A549 (cell line): ENCODE measurements at regions of chrX and their contacts with region 1.

Region 1: DNA sequence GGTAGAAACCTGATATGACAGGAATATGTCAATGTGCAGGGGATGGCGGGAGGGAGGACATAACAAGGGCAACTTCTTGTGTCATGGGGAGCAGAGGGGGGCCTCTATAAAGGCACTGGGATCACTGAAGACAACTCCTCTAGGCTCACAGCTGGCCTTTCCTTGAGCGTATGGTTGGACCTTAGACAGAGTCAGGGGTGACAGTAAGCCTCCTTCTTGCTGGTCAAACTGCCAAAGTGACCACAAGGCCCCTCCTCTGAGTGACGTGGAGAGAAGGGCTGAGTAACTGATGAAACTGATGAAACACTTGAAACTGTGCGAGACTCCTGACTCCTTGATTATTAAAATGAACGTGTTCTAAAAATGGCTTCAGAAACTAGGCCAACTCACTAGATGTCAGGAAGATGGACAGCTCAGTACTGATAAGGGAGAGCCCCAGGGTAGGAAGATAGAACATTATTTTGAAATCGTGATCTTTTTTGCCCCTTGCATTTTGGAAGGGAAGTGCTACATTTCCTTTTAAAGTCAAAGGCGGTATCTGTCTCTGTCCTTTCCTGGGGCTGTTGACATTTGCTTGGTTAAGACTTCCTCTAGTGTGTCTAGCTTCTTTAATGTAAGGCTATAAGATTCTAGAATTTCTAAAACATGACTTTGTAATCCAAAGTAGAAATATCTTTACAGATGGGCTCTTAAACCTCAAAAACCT is 1.6 kb downstream of the RAB33A start:
- DNase-seq: no peak
- ATAC-seq: no peak
- H3K4me3 ChIP-seq: no peak overlapping the region
- H3K27ac ChIP-seq: peak overlapping the region in 1 of 2 experiments; percentile 57; a peak in 2 of 6 replicates
- H3K4me1 ChIP-seq: peaks cover 24% of the 10 kb centered on the region; the same call in 2 of the 3 replicates
- CTCF ChIP-seq: no peak
- EP300 ChIP-seq: no peak
- POLR2A ChIP-seq: no peak
- RAD21 ChIP-seq: no peak

Region 2: DNA sequence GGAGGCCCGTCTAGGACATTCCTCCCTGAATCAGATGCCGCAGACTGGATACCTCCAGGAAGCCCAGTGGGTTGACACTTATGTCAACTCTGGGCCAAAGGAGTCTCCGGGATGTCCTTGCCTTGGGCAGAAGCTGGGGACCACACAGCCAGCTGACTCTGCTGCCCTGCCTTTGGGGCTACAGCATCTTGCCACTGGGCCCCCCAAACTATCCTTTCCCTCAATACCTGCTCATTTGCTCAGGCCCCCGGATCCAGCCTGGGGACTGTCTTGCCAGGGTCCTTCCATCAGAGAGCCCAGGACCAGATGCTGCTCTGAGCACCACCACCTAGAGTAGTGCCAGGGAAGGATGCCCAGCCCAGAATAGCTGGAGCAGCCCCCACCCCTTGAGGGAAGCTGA is 17.5 kb after region 1 on chrX:
- CTCF ChIA-PET with region 1: interaction called, 15 read pairs
- POLR2A ChIA-PET with region 1: no interaction called
- DNase-seq: no peak
- ATAC-seq: no peak
- H3K4me3 ChIP-seq: no peak overlapping the region
- H3K27ac ChIP-seq: no peak overlapping the region
- H3K4me1 ChIP-seq: no peaks in the 10 kb centered on the region
- CTCF ChIP-seq: no peak
- EP300 ChIP-seq: no peak
- POLR2A ChIP-seq: no peak
- RAD21 ChIP-seq: no peak